ENCODE measurements at regions of chr20 and their contacts with region 1.

Region 1: GRCh38 chr20:43456809-43457639 is 672 bp upstream of the SRSF6 start:
- DNase-seq: peak; percentile 94
- H3K4me3 ChIP-seq: peak overlapping the region; percentile 89
- H3K27ac ChIP-seq: peak overlapping the region; percentile 100
- H3K4me1 ChIP-seq: peaks cover 8% of the 10 kb centered on the region
- H3K27me3 ChIP-seq: no peaks in the 10 kb centered on the region
- CTCF ChIP-seq: no peak

Region 2: DNA sequence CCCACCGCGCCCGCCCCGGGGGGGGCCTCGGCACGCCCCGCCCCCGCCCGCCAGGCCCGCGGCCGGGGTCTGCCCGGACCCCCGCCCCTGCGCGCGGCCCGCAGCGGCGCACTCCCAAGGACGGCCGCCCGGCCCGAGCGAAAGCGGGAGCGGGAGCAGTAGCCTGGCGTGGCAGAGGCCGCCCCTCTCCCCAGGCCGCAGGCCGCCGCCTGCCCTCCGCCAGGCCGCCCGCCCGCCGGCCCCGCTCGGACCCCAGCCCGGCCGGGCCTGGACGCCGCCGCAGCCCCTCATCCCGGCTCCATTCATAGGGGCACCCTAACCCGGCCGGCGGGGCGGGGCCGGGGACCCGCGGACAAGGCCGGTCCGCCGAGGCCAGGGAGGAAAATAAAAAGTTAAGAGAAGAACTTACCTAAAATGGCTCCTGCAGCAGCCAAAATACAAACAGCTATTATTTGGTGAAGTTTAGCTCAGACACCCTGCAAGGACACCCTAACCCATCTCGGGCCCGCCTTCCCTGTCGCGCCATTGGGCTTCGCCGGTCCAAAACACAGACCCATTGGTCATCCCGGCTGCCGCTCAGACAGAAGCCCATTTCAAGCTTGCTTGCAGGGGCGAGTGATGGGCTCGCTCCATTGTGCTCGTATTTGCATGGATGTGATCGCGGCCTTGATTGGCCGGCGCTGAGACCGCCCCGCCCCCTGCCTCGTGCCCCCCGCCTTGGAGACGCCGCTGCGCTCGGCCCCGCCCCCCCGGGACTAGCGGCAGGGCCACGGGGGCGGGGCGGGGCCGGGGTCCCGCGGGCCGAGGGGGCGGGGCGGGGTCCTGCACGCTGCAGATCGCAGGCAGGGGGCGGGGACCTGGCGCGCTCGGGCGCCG is 1838.9 kb before region 1 on chr20 and contains the start of gene CHD6:
- CTCF ChIA-PET with region 1: no interaction called
- POLR2A ChIA-PET with region 1: interaction called, 14 read pairs
- intact Hi-C with region 1: no loop called
- DNase-seq: peak; percentile 100
- H3K4me3 ChIP-seq: peak within 1 kb of the TSS; percentile 66
- H3K27ac ChIP-seq: peak within 1 kb of the TSS; percentile 84
- H3K4me1 ChIP-seq: peaks cover 43% of the 10 kb centered on the region
- H3K27me3 ChIP-seq: no peaks in the 10 kb centered on the region
- CTCF ChIP-seq: no peak
- total RNA-seq, gene CHD6: 46.7 and 58.0 TPM in 2 replicates

Region 3: DNA sequence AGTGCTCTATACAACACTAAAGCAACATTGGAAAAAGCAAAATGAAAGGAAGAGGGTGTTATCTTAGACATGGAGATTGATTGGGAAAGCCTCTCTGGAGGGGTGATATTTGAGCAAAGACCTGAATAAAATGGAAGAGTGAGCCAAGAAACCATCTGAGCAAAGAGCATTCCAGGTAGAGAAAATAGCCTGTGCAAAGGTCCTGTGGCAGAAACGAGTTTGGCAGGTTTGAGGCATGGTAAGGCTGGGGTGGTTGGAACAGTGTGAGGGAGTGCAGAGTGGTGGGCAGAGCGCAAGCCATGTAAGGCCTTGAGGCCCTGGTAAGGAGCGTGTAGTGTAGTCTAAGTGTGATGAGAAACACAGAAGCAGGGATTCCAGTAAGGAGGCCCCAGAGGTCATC is 227.3 kb before region 1 on chr20:
- CTCF ChIA-PET with region 1: no interaction called
- POLR2A ChIA-PET with region 1: no interaction called
- intact Hi-C with region 1: no loop called
- DNase-seq: no peak
- H3K4me3 ChIP-seq: no peak overlapping the region
- H3K27ac ChIP-seq: no peak overlapping the region
- H3K4me1 ChIP-seq: no peaks in the 10 kb centered on the region
- H3K27me3 ChIP-seq: peaks cover 24% of the 10 kb centered on the region
- CTCF ChIP-seq: no peak

Region 4: GRCh38 chr20:43379578-43379917 is 77.5 kb before region 1 on chr20:
- CTCF ChIA-PET with region 1: no interaction called
- POLR2A ChIA-PET with region 1: no interaction called
- intact Hi-C with region 1: no loop called
- DNase-seq: no peak
- H3K4me3 ChIP-seq: no peak overlapping the region
- H3K27ac ChIP-seq: no peak overlapping the region
- H3K4me1 ChIP-seq: no peaks in the 10 kb centered on the region
- H3K27me3 ChIP-seq: no peaks in the 10 kb centered on the region
- CTCF ChIP-seq: no peak

Region 5: GRCh38 chr20:43477193-43477592 is 20.2 kb after region 1 on chr20:
- CTCF ChIA-PET with region 1: no interaction called
- POLR2A ChIA-PET with region 1: interaction called, 16 read pairs
- intact Hi-C with region 1: no loop called
- DNase-seq: no peak
- H3K4me3 ChIP-seq: no peak overlapping the region
- H3K27ac ChIP-seq: no peak overlapping the region
- H3K4me1 ChIP-seq: no peaks in the 10 kb centered on the region
- H3K27me3 ChIP-seq: peaks cover 4% of the 10 kb centered on the region
- CTCF ChIP-seq: no peak

Region 6: DNA sequence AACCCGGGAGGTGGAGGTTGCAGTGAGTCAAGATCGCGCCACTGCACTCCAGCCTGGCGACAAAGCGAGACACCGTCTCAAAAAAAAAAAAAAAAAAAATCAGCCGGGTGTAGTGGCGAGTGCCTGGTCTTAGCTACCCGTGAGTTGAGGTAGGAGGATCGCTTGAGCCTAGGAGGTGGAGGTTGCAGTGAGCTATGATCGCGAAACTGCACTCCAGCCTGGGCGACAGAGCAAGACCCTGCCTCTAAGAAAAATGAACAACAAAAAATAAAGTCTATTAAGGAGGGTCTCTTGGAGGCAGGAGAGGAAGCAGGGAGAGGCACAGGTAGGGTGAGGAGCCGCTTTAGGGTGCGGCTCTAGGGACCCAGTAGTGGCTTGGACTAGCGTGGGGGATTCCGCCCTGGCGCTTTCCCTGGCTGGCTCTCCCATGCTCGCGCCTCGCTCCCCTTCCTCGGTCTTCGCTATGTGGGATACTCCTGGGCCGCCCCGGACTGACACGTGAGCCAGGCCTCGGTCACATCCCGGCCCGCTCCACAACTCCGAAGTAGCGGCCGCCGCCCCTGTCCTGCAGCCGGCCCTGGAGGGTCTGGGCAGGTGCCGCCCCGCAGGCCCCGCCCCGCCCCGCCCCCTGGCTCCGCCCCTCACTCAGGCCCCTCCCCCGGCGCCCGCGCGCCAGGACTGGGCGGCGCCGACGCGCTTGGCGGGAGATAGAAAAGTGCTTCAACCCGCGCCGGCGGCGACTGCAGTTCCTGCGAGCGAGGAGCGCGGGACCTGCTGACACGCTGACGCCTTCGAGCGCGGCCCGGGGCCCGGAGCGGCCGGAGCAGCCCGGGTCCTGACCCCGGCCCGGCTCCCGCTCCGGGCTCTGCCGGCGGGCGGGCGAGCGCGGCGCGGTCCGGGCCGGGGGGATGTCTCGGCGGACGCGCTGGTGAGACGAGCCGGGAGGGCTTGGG is 209.6 kb after region 1 on chr20 and contains the start of gene MYBL2:
- CTCF ChIA-PET with region 1: no interaction called
- POLR2A ChIA-PET with region 1: no interaction called
- intact Hi-C with region 1: loop called (anchors 2 kb)
- DNase-seq: peak; percentile 84
- H3K4me3 ChIP-seq: peak within 1 kb of the TSS; percentile 69
- H3K27ac ChIP-seq: peak within 1 kb of the TSS; percentile 85
- H3K4me1 ChIP-seq: peaks cover 12% of the 10 kb centered on the region
- H3K27me3 ChIP-seq: no peaks in the 10 kb centered on the region
- CTCF ChIP-seq: no peak
- total RNA-seq, gene MYBL2: 256 TPM in 2 replicates

Region 7: GRCh38 chr20:43975096-43975768 is 518.2 kb after region 1 on chr20:
- CTCF ChIA-PET with region 1: no interaction called
- POLR2A ChIA-PET with region 1: interaction called, 15 read pairs
- intact Hi-C with region 1: no loop called
- DNase-seq: peak; percentile 34
- H3K4me3 ChIP-seq: no peak overlapping the region
- H3K27ac ChIP-seq: peak overlapping the region; percentile 50
- H3K4me1 ChIP-seq: peaks cover 38% of the 10 kb centered on the region
- H3K27me3 ChIP-seq: no peaks in the 10 kb centered on the region
- CTCF ChIP-seq: no peak